KBM-7 (cell line): ENCODE measurements at regions of chr16 and their contacts with region 1.

Region 1: GRCh38 chr16:788394-789126 is at the start of gene CHTF18:
- DNase-seq: peak; percentile 77

Region 2: GRCh38 chr16:589658-590159 is 198.9 kb before region 1 on chr16 and contains the start of gene RAB40C:
- in situ Hi-C with region 1: no loop called
- DNase-seq: peak; percentile 95

Region 3: DNA sequence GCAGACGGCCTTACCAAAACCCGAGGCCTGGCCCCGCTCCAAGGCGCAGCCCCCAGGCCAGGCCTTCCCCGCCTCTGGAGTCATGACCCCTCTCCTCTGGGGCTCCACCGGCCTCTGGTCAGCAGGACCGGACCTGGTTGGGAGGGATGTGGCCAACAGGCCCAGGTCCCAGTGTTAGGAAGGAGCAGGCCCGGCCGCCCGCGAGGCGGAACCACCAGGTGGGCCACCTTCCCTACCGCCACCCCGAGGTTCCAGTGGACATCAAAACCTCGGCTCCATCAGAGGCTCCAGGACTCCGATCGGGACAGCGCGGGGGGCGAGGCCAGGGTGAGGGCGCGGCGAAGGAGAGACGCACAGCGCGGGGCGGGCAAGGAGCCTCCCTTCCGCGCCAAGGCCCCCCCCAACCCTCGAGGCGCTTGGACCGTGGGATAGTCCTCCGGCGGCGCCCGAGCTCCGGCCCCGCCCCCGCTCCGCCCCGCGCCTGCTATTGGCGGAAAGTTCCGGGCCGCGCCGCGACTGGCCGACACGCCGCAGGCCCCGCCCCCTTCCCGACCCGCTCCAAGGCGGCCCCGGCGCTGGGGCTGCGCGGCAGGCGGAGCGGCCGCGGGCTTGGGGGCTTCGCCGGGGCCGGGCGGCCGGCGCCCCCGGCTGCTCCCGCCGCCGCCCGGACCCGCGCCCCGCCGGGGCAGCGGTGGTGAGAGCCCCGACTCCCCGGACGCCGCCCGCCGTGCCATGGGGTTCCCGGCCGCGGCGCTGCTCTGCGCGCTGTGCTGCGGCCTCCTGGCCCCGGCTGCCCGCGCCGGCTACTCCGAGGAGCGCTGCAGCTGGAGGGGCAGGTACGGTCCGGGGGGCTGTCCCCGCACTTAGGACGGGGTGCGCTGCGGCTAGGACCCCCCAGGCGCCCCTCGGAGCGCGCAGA is 73.7 kb before region 1 on chr16 and contains the start of gene METRN:
- in situ Hi-C with region 1: loop called (anchors 10 kb)
- DNase-seq: peak; percentile 77